Activated T-helper 1 cell treated with anti-CD3 and anti-CD28 coated beads, Interleukin-12 subunit alpha, Interleukin-12 subunit beta, Interleukin-2, Interleukin-4 antibody, amounts not matched to agents 30 ng/mL and 10 ng/mL and 1 ng/mL, durations not matched to agents 14 hours and 24 hours and 36 hours (primary cell): ENCODE measurements at regions of chr4 and their contacts with region 1.

Region 1: GRCh38 chr4:122341906-122342305 is 36.9 kb upstream of the ADAD1 start:
- DNase-seq: no peak
- H3K4me3 Mint-ChIP-seq: no peak overlapping the region
- H3K27ac Mint-ChIP-seq: no peak overlapping the region
- H3K4me1 Mint-ChIP-seq: no peaks in the 10 kb centered on the region
- H3K27me3 Mint-ChIP-seq: no peaks in the 10 kb centered on the region

Region 2: GRCh38 chr4:122329876-122330565 is 11.9 kb before region 1 on chr4:
- intact Hi-C with region 1: no loop called
- DNase-seq: no peak
- H3K4me3 Mint-ChIP-seq: no peak overlapping the region
- H3K27ac Mint-ChIP-seq: no peak overlapping the region
- H3K4me1 Mint-ChIP-seq: peaks cover 11% of the 10 kb centered on the region
- H3K27me3 Mint-ChIP-seq: no peaks in the 10 kb centered on the region

Region 3: GRCh38 chr4:122379239-122379638 is 37.3 kb after region 1 on chr4:
- intact Hi-C with region 1: loop called (anchors 1 kb)
- DNase-seq: no peak
- H3K4me3 Mint-ChIP-seq: no peak overlapping the region
- H3K27ac Mint-ChIP-seq: no peak overlapping the region
- H3K4me1 Mint-ChIP-seq: no peaks in the 10 kb centered on the region
- H3K27me3 Mint-ChIP-seq: no peaks in the 10 kb centered on the region